Activated CD8-positive, alpha-beta memory T cell treated with anti-CD3 and anti-CD28 coated beads, Interleukin-2, amount 10 ng/mL, durations not matched to agents 7 days and 5 days (primary cell): ENCODE measurements at regions of chr19 and their contacts with region 1.

Region 1: GRCh38 chr19:38869856-38870607 is 8.0 kb downstream of the RINL start:
- DNase-seq: peak; percentile 95
- ATAC-seq: peak; percentile 96
- H3K4me3 Mint-ChIP-seq: peak overlapping the region; percentile 79
- H3K27ac Mint-ChIP-seq: peak overlapping the region; percentile 85
- H3K4me1 Mint-ChIP-seq: peaks cover 37% of the 10 kb centered on the region
- H3K27me3 Mint-ChIP-seq: no peaks in the 10 kb centered on the region

Region 2: GRCh38 chr19:38842439-38843174 is 27.4 kb before region 1 on chr19:
- CTCF ChIA-PET with region 1: interaction called, 12 read pairs
- DNase-seq: peak; percentile 91
- ATAC-seq: peak; percentile 89
- H3K4me3 Mint-ChIP-seq: peak overlapping the region; percentile 65
- H3K27ac Mint-ChIP-seq: peak overlapping the region; percentile 90
- H3K4me1 Mint-ChIP-seq: peaks cover 83% of the 10 kb centered on the region
- H3K27me3 Mint-ChIP-seq: no peaks in the 10 kb centered on the region

Region 3: GRCh38 chr19:38849147-38849859 is 20.7 kb before region 1 on chr19:
- CTCF ChIA-PET with region 1: interaction called, 24 read pairs
- DNase-seq: peak; percentile 98
- ATAC-seq: peak; percentile 29
- H3K4me3 Mint-ChIP-seq: peak overlapping the region; percentile 88
- H3K27ac Mint-ChIP-seq: peak overlapping the region; percentile 99
- H3K4me1 Mint-ChIP-seq: peaks cover 57% of the 10 kb centered on the region
- H3K27me3 Mint-ChIP-seq: no peaks in the 10 kb centered on the region

Region 4: DNA sequence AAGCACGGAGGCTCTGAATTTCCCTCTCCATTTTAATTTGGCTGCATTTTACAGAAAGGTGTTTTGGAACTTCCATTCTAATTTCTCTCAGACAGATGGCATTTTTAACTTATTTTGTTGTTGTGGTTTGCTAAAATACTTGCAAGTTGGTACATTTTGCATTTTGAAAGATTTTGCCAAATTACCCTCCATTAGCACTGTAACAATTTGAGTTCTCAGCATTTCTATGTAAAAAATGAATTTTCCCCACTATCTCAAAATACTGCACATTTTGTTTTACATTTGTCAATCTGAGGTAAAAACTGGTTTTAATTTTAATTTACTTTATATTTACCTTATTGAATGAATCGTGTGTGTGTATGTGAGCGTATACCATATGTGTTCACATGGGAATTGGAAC is 13.2 kb before region 1 on chr19:
- CTCF ChIA-PET with region 1: interaction called, 24 read pairs
- DNase-seq: no peak
- ATAC-seq: no peak
- H3K4me3 Mint-ChIP-seq: peak overlapping the region; percentile 17
- H3K27ac Mint-ChIP-seq: peak overlapping the region; percentile 79
- H3K4me1 Mint-ChIP-seq: peaks cover 38% of the 10 kb centered on the region
- H3K27me3 Mint-ChIP-seq: no peaks in the 10 kb centered on the region